Spleen (tissue), 13 donors: ENCODE measurements at regions of chr7 and their contacts with region 1.

Region 1: DNA sequence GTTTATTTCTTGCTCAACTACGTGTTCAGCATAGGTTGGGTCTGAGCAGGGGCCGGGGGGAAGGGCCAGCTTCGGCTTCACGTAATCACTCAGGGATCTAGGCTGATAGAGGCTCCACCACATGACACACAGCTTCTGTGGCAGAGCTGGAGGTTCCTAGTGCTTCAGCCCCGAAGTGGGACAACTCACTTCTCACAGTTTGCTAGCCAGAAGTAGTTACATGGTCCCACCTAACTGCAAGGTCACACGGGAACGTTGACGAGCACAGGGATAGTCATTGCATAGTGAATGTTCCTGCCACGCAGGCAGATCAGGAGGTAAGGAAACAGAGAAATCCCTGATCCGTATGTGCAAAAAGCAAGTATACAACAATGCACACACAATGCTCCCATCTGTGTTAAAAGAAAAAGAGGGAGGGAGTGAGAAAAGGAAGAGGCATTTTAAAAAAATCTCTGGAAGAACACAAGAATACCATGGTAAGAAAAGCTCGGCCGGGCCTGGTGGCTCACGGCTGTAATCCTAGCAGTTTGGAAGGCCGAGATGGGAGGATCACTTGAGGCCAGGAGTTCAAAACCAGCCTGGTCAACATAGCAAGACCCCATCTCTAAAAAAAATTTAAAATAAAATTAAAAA is 16.9 kb downstream of the SMURF1 start:
- DNase-seq: no peak
- H3K4me3 ChIP-seq: no peak overlapping the region
- H3K27ac ChIP-seq: no peak overlapping the region
- H3K4me1 ChIP-seq: peaks cover 13 to 91% (median 39%) of the 10 kb centered on the region in 6 donors
- H3K27me3 ChIP-seq: no peaks in the 10 kb centered on the region
- CTCF ChIP-seq: no peak
- POLR2A ChIP-seq: no peak

Region 2: DNA sequence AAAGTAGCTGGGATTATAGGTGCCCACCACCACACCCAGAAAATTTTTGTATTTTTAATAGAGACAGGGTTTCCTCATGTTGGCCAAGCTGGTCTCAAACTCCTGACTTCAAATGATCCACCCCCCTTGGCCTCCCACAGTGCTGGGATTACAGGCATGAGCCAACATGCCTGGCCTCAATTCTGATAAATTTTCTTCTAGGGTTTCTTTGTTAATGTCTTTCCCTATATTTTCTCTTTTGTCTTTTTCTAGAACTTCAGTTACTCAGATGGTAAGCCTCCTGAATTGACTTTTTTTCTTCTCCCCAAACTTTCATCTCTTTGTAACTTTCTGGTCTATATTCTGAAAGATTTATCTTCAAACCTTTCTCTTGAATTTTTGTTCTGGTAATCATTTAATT is 29.6 kb after region 1 on chr7:
- intact Hi-C with region 1: loop called (anchors 2 kb)
- DNase-seq: no peak
- H3K4me3 ChIP-seq: no peak overlapping the region
- H3K27ac ChIP-seq: no peak overlapping the region
- H3K4me1 ChIP-seq: no peaks in the 10 kb centered on the region
- H3K27me3 ChIP-seq: no peaks in the 10 kb centered on the region
- CTCF ChIP-seq: no peak
- POLR2A ChIP-seq: no peak